IMR-90 (cell line): ENCODE measurements at regions of chr5 and their contacts with region 1.

Region 1: DNA sequence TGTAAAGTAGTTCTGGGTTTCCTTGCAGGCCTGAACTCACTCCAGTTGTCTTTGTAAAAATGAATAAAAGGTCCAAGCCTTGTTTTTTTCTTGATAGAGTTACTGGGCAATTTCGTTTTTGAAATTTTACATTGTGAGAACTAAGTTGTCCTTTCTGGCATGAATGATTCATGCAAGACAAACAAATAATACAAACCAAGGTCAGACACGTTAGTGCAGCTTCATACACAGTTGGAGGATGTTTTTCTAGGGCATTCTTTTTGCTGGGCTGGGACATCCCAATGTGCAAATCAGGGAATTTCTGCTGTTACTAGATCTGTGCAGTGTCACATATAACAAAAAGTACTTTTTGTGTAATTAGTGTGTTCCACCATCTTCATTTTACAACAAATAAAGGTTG is 96.0 kb downstream of the MEGF10 start:
- DNase-seq: peak; percentile 56
- ATAC-seq: peak; percentile 89
- H3K4me3 ChIP-seq: no peak overlapping the region
- H3K27ac ChIP-seq: no peak overlapping the region
- H3K4me1 ChIP-seq: peaks cover 2% of the 10 kb centered on the region; the same call in 1 of the 2 replicates
- H3K27me3 ChIP-seq: peaks cover 1% of the 10 kb centered on the region; the same call in 1 of the 2 replicates
- CTCF ChIP-seq: no peak
- POLR2A ChIP-seq: no peak
- RAD21 ChIP-seq: no peak

Region 2: DNA sequence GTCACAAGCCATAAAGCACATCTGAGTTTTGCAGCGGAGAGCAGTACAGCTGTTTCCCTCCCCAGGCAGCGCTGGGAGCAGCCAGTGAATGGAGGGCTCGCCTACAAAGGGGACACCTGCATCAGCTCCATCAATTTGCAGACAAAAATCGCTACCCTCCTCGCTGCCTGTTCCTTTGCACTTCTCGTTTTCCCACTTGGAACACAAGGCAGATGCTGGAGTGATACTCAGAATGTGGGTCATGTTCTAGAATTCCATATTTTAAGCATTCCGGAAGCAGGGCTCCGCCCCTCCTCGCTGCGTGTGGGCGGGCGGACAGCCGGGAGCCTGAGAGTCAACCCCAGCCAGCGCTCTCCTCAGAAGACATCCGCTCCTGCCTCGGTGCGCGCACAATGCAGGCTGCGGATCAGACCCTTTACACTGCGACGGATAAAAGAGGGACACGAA is 517.5 kb before region 1 on chr5:
- CTCF ChIA-PET with region 1: no interaction called
- POLR2A ChIA-PET with region 1: no interaction called
- dilution Hi-C with region 1: no loop called
- in situ Hi-C with region 1: no loop called
- intact Hi-C with region 1: loop called (anchors 10 kb)
- DNase-seq: peak; percentile 45
- ATAC-seq: peak; percentile 93
- H3K4me3 ChIP-seq: peak overlapping the region; percentile 34
- H3K27ac ChIP-seq: no peak overlapping the region
- H3K4me1 ChIP-seq: peaks cover 3% of the 10 kb centered on the region; the same call in 1 of the 2 replicates
- H3K27me3 ChIP-seq: no peaks in the 10 kb centered on the region
- CTCF ChIP-seq: no peak
- POLR2A ChIP-seq: no peak
- RAD21 ChIP-seq: no peak

Region 3: DNA sequence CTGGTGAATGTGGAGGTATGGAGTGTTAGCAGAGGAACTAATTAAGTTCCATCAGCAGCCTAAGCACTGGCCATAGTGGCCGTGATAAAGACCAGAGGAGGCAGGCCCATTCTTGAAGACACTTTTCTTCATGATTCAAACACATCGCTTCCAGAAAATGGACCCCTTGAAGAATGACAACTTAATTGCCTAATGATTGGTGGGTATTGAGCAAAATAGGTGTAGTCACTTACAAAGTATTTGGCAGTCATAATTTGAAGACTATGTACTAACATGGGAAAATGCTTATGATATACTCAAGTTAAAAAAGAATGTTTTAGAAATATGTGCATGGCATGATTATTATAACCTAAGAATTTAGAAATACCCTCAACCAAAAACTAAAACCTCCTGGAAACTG is 51.2 kb before region 1 on chr5:
- CTCF ChIA-PET with region 1: no interaction called
- POLR2A ChIA-PET with region 1: no interaction called
- dilution Hi-C with region 1: no loop called
- in situ Hi-C with region 1: no loop called
- intact Hi-C with region 1: no loop called
- DNase-seq: no peak
- ATAC-seq: no peak
- H3K4me3 ChIP-seq: no peak overlapping the region
- H3K27ac ChIP-seq: no peak overlapping the region
- H3K4me1 ChIP-seq: no peaks in the 10 kb centered on the region
- H3K27me3 ChIP-seq: peaks cover 10% of the 10 kb centered on the region
- CTCF ChIP-seq: no peak
- POLR2A ChIP-seq: no peak
- RAD21 ChIP-seq: no peak

Region 4: GRCh38 chr5:127718181-127718580 is 331.6 kb after region 1 on chr5:
- CTCF ChIA-PET with region 1: no interaction called
- POLR2A ChIA-PET with region 1: no interaction called
- dilution Hi-C with region 1: no loop called
- in situ Hi-C with region 1: no loop called
- intact Hi-C with region 1: no loop called
- DNase-seq: no peak
- ATAC-seq: no peak
- H3K4me3 ChIP-seq: no peak overlapping the region
- H3K27ac ChIP-seq: no peak overlapping the region
- H3K4me1 ChIP-seq: no peaks in the 10 kb centered on the region
- H3K27me3 ChIP-seq: no peaks in the 10 kb centered on the region
- CTCF ChIP-seq: no peak
- POLR2A ChIP-seq: no peak
- RAD21 ChIP-seq: no peak